Activated B cell treated with CpG ODN at 0.5 μM for 24 hours (primary cell): ENCODE measurements at regions of chr7 and their contacts with region 1.

Region 1: GRCh38 chr7:129054438-129055293 is at the start of gene TNPO3:
- DNase-seq: peak; percentile 85
- ATAC-seq: peak; percentile 84
- H3K4me3 Mint-ChIP-seq: peak within 1 kb of the TSS; percentile 99
- H3K27ac Mint-ChIP-seq: peak within 1 kb of the TSS; percentile 99
- H3K4me1 Mint-ChIP-seq: peaks cover 47% of the 10 kb centered on the region
- H3K27me3 Mint-ChIP-seq: no peaks in the 10 kb centered on the region
- CTCF ChIP-seq: no peak
- total RNA-seq, gene TNPO3: 50.8 and 56.2 TPM in 2 replicates

Region 2: DNA sequence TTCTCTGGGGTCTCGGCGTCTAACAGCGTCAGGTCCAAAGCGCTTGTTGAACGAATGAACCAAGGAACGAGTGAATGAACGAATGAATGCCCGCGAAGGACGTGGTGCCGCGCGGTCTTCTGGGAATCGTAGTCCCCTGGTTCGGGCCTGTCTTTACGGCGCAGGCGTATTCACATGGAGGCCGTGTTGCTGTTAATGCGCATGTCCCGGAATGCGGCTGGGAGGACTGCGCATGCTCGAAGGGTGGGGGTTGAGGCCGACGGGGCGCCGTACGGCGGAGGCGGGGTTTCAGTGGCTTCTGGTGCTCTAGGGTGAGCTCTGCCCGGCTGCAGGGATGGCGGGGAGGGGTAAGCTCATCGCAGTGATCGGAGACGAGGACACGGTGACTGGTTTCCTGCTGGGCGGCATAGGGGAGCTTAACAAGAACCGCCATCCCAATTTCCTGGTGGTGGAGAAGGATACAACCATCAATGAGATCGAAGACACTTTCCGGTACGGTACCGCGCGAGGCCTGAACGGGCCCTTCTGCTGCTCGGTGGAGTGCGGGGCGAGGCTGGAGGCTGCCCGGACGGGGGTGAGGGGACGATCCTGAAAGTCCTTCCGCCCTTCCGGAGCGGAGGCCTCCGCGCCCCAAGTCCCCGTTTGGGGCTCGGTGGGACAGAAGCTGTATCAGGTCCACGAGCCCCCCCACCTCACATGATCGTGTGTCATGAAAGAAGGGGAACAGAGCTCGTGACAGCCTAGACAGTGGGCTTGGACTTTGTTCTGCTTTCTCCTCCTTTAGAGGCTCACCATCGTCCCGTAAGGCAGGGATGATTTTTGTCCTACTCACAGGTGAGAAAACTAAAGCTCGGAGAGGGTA is 191.9 kb before region 1 on chr7 and contains the start of gene ATP6V1F:
- CTCF ChIA-PET with region 1: no interaction called
- POLR2A ChIA-PET with region 1: interaction called, 3 read pairs
- intact Hi-C with region 1: loop called (anchors 2 kb)
- DNase-seq: peak; percentile 99
- ATAC-seq: peak; percentile 92
- H3K4me3 Mint-ChIP-seq: peak within 1 kb of the TSS; percentile 97
- H3K27ac Mint-ChIP-seq: peak within 1 kb of the TSS; percentile 96
- H3K4me1 Mint-ChIP-seq: peaks cover 30% of the 10 kb centered on the region
- H3K27me3 Mint-ChIP-seq: no peaks in the 10 kb centered on the region
- CTCF ChIP-seq: no peak
- total RNA-seq, gene ATP6V1F: 100.0 and 113 TPM in 2 replicates

Region 3: GRCh38 chr7:129009437-129009836 is 45.2 kb before region 1 on chr7:
- CTCF ChIA-PET with region 1: no interaction called
- POLR2A ChIA-PET with region 1: interaction called, 17 read pairs
- intact Hi-C with region 1: loop called (anchors 2 kb)
- DNase-seq: no peak
- ATAC-seq: peak; percentile 86
- H3K4me3 Mint-ChIP-seq: peak overlapping the region; percentile 17
- H3K27ac Mint-ChIP-seq: peak overlapping the region; percentile 82
- H3K4me1 Mint-ChIP-seq: peaks cover 43% of the 10 kb centered on the region
- H3K27me3 Mint-ChIP-seq: no peaks in the 10 kb centered on the region
- CTCF ChIP-seq: no peak

Region 4: DNA sequence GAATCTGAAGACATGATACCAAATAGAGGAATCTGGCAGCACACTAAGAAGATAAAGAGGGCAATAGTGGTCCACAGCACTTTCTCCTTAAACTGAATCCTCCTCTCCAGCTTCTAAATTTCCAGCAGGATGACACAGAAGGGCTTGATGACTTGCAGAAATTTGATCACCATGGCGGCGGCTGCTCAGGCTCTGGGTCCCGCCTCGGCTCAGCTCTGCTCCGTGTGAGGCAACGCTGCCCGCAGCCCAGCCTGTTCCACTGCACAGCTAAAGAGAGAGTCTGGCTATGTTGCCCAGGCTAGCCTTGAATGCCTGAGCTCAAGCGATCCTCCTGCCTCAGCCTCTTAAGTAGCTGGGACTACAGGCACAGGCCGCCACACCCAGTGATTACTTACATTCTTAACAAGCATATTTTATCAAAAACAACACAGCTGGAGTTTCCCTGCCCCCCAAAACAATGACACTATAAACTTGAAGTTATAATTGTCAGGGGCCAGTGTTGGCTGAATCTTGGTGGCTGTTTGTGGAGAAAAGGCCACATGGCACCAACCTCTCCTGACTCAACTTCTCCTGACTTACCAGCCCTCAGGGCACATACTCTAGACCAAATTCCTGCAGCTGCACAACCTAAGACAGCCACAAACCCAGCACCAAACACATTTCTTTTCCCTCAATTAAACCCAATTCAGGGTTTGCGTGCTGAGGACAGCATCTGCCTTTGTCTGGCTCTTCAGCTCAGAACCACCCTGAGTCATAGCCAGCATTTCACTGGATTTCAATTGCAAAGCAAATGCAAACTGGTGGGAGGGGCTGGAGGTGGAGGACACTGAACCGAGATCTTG is 11.8 kb after region 1 on chr7:
- CTCF ChIA-PET with region 1: no interaction called
- POLR2A ChIA-PET with region 1: interaction called, 26 read pairs
- intact Hi-C with region 1: no loop called
- DNase-seq: no peak
- ATAC-seq: no peak
- H3K4me3 Mint-ChIP-seq: no peak overlapping the region
- H3K27ac Mint-ChIP-seq: no peak overlapping the region
- H3K4me1 Mint-ChIP-seq: peaks cover 6% of the 10 kb centered on the region
- H3K27me3 Mint-ChIP-seq: no peaks in the 10 kb centered on the region
- CTCF ChIP-seq: no peak

Region 5: DNA sequence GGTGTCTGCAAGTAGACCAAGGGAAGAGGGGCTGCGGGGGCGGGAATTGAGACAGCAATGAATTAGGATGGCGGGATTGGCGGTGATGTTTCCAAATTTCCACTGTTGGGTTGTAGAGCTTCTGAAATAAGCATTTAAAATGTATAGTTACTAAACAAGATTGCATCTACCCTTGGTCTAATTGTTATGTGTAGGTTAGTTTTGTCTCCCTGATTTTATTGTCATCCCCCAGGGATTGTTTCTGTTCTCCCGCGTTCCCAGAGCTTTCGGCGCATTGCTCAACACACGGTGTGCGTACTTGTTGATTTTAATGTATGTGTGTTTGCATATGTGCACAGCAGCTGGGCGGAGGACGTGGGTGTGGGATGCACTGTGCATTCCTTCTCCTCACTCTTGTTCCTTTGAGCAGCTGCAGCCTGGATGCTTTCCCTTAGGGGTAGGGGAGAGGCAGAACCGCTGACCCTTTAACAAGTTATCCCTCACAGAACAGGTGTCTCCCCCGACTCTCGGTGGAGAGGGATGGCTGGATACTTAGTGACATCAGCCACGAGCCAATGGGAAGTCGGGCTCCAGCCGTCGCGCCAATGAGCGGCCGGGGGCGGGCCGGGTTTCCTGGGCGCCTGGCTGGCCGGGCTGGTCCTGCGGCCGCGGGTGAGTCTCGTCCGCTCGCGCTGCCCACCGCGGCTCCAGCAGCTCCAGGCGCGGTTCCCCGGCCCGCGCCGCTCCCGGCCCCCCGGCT is 89.6 kb after region 1 on chr7 and contains the start of gene TSPAN33:
- CTCF ChIA-PET with region 1: no interaction called
- POLR2A ChIA-PET with region 1: interaction called, 29 read pairs
- intact Hi-C with region 1: loop called (anchors 1 kb)
- DNase-seq: peak; percentile 75
- ATAC-seq: peak; percentile 62
- H3K4me3 Mint-ChIP-seq: peak within 1 kb of the TSS; percentile 98
- H3K27ac Mint-ChIP-seq: peak within 1 kb of the TSS; percentile 99
- H3K4me1 Mint-ChIP-seq: peaks cover 48% of the 10 kb centered on the region
- H3K27me3 Mint-ChIP-seq: no peaks in the 10 kb centered on the region
- CTCF ChIP-seq: no peak
- total RNA-seq, gene TSPAN33: 332 and 341 TPM in 2 replicates

Region 6: DNA sequence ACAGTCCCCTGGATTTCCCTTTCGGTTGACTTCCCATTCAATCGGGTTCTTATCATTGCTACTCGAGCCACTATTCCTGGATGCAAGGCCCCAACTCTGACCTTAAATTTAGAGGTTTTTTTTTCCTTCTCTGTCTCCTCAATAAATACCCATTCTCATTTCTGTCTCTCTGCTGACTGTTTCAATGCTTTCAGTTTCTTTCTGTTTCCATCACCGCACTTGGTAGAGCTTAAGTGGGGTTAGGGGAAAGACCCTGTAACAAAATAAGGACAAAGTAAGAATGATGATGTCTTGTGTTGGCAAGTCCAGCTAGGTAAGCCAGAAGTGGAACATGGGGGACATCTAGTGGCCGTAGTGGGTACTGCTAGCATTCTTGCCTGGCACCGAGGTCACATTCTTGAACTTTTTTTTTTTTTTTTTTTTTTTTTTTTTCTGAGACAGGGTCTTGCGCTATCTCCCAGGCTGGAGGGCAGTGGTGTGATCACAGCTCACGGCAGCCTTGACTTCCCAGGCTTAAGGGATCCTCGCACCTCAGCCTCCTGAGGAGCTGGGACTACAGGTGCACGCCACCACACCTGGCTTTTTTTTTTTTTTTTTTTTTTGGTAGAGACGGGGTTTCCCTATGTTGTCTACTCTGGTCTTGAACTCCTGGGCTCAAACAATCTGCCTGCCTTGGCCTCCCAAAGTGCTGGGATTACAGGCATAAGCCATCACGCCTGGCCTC is 956.2 kb after region 1 on chr7:
- CTCF ChIA-PET with region 1: no interaction called
- POLR2A ChIA-PET with region 1: no interaction called
- intact Hi-C with region 1: no loop called
- DNase-seq: peak; percentile 74
- ATAC-seq: peak; percentile 91
- H3K4me3 Mint-ChIP-seq: no peak overlapping the region
- H3K27ac Mint-ChIP-seq: no peak overlapping the region
- H3K4me1 Mint-ChIP-seq: peaks cover 9% of the 10 kb centered on the region
- H3K27me3 Mint-ChIP-seq: no peaks in the 10 kb centered on the region
- CTCF ChIP-seq: peak; percentile 51